HepG2 (cell line): ENCODE measurements at regions of chr4 and their contacts with region 1.

Region 1: DNA sequence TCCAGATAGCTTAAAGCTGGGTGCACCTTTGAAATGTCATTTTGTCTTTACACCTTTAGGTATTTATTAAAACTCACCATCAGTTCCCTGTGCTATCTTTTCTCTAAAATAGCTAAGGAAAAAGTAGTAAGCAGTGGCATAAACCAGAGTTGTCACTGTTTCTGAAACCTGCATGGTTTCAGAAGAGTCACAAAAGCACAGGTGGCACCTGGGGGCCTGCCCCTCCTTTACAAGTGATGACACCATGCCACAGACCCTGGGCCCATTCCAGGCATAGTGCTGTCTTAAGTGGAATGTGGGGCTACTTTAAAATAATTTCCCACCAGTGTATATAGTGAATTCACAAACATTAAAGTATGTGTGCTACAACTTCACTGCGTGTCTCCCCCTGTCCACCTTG is 47.8 kb downstream of the DCUN1D4 start:
- DNase-seq: no peak
- ATAC-seq: no peak
- H3K4me3 ChIP-seq: no peak overlapping the region
- H3K27ac ChIP-seq: no peak overlapping the region
- H3K4me1 ChIP-seq: peaks cover 8% of the 10 kb centered on the region
- H3K27me3 ChIP-seq: no peaks in the 10 kb centered on the region
- CTCF ChIP-seq: no peak
- EP300 ChIP-seq: no peak
- POLR2A ChIP-seq: no peak
- RAD21 ChIP-seq: no peak

Region 2: GRCh38 chr4:51906167-51906958 is 15.6 kb after region 1 on chr4:
- CTCF ChIA-PET with region 1: no interaction called
- POLR2A ChIA-PET with region 1: interaction called, 5 read pairs
- in situ Hi-C with region 1: no loop called
- intact Hi-C with region 1: loop called (anchors 2 kb)
- DNase-seq: no peak
- ATAC-seq: no peak
- H3K4me3 ChIP-seq: no peak overlapping the region
- H3K27ac ChIP-seq: no peak overlapping the region
- H3K4me1 ChIP-seq: peaks cover 49% of the 10 kb centered on the region
- H3K27me3 ChIP-seq: no peaks in the 10 kb centered on the region
- CTCF ChIP-seq: no peak
- EP300 ChIP-seq: no peak
- POLR2A ChIP-seq: no peak
- RAD21 ChIP-seq: no peak